ENCODE measurements at regions of chr14 and their contacts with region 1.

Region 1: GRCh38 chr14:49892636-49893308 is at the start of gene ARF6:
- DNase-seq: peak; percentile 99
- ATAC-seq: peak; percentile 91
- H3K4me3 Mint-ChIP-seq: peak within 1 kb of the TSS; percentile 94
- H3K27ac Mint-ChIP-seq: peak within 1 kb of the TSS; percentile 99
- H3K4me1 Mint-ChIP-seq: peaks cover 18% of the 10 kb centered on the region
- H3K27me3 Mint-ChIP-seq: no peaks in the 10 kb centered on the region
- total RNA-seq, gene ARF6: 171 to 190 TPM

Region 2: GRCh38 chr14:49879683-49880204 is 13.0 kb before region 1 on chr14:
- CTCF ChIA-PET with region 1: interaction called, 48 read pairs
- DNase-seq: peak; percentile 83
- ATAC-seq: peak; percentile 96
- H3K4me3 Mint-ChIP-seq: no peak overlapping the region
- H3K27ac Mint-ChIP-seq: peak overlapping the region; percentile 52
- H3K4me1 Mint-ChIP-seq: peaks cover 24% of the 10 kb centered on the region
- H3K27me3 Mint-ChIP-seq: no peaks in the 10 kb centered on the region

Measured in activated CD8-positive, alpha-beta memory T cell treated with anti-CD3 and anti-CD28 coated beads, Interleukin-2, amount 10 ng/mL, durations not matched to agents 7 days and 5 days (primary cell).